Lower leg skin (tissue), 4 donors: ENCODE measurements at regions of chr20 and their contacts with region 1.

Region 1: GRCh38 chr20:34955232-34956040 is at the starts of genes GSS and MYH7B:
- DNase-seq: peak; percentile 95 to 99
- H3K4me3 ChIP-seq: peak within 1 kb of the TSS; percentile 47
- CTCF ChIP-seq: peak in 1 of 3 donors; percentile 37
- POLR2A ChIP-seq: peak in 1 of 2 donors; percentile 31
- total RNA-seq, gene GSS: 49.9 to 56.7 (median 52.9) TPM
- total RNA-seq, gene MYH7B: 0.10 to 0.27 (median 0.18) TPM

Region 2: GRCh38 chr20:34579191-34579978 is 376.1 kb before region 1 on chr20:
- intact Hi-C with region 1: no loop called
- DNase-seq: peak; percentile 40 to 82
- H3K4me3 ChIP-seq: no peak overlapping the region
- CTCF ChIP-seq: no peak
- POLR2A ChIP-seq: no peak

Region 3: DNA sequence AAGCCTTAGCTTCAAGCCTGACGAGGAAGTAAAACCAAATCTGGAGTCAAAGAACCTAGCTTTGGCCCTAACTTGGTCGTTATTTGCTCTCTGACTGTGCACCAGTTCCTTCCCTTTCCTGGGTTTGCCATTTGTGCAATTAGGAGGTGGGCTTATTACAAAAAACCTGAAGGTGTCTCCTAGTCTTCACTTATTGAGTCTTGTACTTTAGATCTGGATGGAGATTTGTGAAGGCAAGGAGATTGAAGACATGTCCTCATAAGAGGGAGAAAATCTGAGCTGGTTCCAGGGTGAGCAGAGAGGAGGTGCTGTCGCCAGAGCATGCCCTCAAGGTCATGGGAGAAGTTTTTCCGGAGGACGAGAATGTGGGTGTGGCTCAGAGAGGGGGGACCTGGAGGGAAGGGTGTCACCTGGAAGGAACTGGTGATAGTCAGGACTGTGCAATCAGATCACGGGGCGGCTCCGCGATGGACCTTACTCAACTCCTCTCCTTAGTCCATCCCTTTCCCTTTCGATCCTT is 79.7 kb before region 1 on chr20:
- intact Hi-C with region 1: loop called (anchors 1 kb)
- DNase-seq: no peak
- H3K4me3 ChIP-seq: no peak overlapping the region
- CTCF ChIP-seq: no peak
- POLR2A ChIP-seq: no peak

Region 4: DNA sequence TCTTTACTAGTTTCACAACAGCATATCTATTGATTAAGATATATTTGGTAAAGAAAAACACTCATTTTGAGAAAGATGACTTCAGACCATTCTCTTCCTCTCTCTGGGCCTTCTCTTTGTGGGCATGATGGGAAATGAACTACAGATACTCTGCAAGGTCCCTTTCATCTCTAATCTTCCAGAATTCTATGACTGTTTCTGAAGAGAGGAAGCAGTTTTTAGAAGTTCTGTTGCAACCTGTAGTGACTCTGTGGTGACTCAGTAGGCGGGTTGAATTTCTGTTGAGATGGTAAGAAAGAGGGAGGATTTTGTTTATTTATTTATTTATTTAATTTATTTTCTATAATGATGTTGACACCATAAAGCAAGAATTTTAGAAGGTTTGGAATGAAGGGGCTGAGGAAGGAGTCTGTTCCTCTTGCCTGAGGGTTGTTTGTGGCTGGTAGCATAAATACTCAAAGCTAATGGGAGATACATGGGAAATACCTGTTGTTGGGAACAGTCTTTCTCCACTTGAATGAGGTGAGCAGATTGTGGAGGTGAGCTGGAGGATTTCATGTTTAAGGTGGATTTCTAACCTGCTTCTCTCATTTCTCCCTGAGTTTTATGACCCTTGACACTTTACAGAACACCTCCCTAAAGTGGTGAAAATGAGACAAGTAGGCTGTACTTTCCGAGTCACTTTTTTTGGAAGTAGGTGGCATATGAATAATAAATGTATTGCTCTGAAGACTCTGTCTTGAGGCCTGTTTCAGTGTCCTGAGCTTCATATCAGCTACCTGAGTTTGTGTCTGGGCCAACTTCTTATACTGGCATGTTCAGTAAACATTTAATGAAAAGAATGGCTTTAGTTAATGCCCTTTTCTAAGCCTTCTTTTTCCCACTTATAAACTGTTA is 64.0 kb before region 1 on chr20:
- intact Hi-C with region 1: no loop called
- DNase-seq: no peak
- H3K4me3 ChIP-seq: no peak overlapping the region
- CTCF ChIP-seq: no peak
- POLR2A ChIP-seq: no peak

Region 5: GRCh38 chr20:35368666-35369423 is 413.4 kb after region 1 on chr20:
- intact Hi-C with region 1: loop called (anchors 5 kb)
- DNase-seq: no peak
- H3K4me3 ChIP-seq: no peak overlapping the region
- CTCF ChIP-seq: no peak
- POLR2A ChIP-seq: no peak